ENCODE measurements at regions of chr7 and their contacts with region 1.

Region 1: DNA sequence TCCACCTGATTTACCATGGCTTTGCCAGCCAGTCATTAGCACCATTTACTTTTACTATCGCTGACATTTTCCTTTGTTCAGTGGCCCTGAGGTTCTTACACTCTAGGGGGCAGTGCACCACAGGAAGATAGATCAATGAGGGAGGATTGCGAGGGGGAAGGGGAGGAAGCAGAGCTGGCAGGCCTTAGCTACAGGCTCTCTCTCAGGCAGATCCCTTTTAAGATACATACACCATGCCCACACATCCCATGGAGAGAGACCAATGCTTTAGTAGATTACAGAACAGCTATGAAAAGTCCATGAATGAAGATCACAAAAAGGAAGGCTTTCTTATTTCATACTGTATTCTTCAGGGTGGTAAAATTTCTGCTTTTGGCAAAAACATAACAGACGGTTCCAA is 47.4 kb downstream of the DENND11 start:
- DNase-seq: peak; percentile 87
- H3K4me3 ChIP-seq: no peak overlapping the region; a peak in 1 of 4 replicates
- H3K27ac ChIP-seq: peak overlapping the region; percentile 12 to 64; a peak in 3 of 4 replicates
- H3K4me1 ChIP-seq: peaks cover 0 to 11% of the 10 kb centered on the region in 2 experiments; a peak in 2 of 4 replicates
- H3K27me3 ChIP-seq: no peaks in the 10 kb centered on the region
- CTCF ChIP-seq: peak; percentile 94
- EP300 ChIP-seq: peak in 1 of 2 experiments; percentile 13; a peak in 1 of 4 replicates
- RAD21 ChIP-seq: peak; percentile 91

Region 2: GRCh38 chr7:140810830-140811556 is 843.6 kb before region 1 on chr7:
- CTCF ChIA-PET with region 1: interaction called, 13 read pairs
- POLR2A ChIA-PET with region 1: no interaction called
- DNase-seq: peak; percentile 67
- H3K4me3 ChIP-seq: no peak overlapping the region; a peak in 1 of 4 replicates
- H3K27ac ChIP-seq: no peak overlapping the region
- H3K4me1 ChIP-seq: peaks cover 0 to 7% of the 10 kb centered on the region in 2 experiments; a peak in 2 of 4 replicates
- H3K27me3 ChIP-seq: no peaks in the 10 kb centered on the region
- CTCF ChIP-seq: peak; percentile 95
- EP300 ChIP-seq: 0 out of 4 replicates have a peak, but pooled peaks of 1 of the 2 experiments have one; percentile 11
- RAD21 ChIP-seq: peak; percentile 89

Region 3: GRCh38 chr7:141220263-141220880 is 434.2 kb before region 1 on chr7:
- CTCF ChIA-PET with region 1: interaction called, 12 read pairs
- POLR2A ChIA-PET with region 1: no interaction called
- DNase-seq: peak; percentile 86
- H3K4me3 ChIP-seq: peak overlapping the region in 1 of 2 experiments; percentile 47; a peak in 1 of 4 replicates
- H3K27ac ChIP-seq: no peak overlapping the region
- H3K4me1 ChIP-seq: peaks cover 0 to 22% of the 10 kb centered on the region in 2 experiments; a peak in 1 of 4 replicates
- H3K27me3 ChIP-seq: no peaks in the 10 kb centered on the region
- CTCF ChIP-seq: no peak
- EP300 ChIP-seq: no peak
- RAD21 ChIP-seq: peak; percentile 90

Region 4: GRCh38 chr7:141551094-141551781 is 103.3 kb before region 1 on chr7 and contains the start of gene AGK:
- CTCF ChIA-PET with region 1: interaction called, 18 read pairs
- POLR2A ChIA-PET with region 1: interaction called, 5 read pairs
- DNase-seq: peak; percentile 98
- H3K4me3 ChIP-seq: peak within 1 kb of the TSS; percentile 76 to 84
- H3K27ac ChIP-seq: peak within 1 kb of the TSS; percentile 25 to 84; a peak in 3 of 4 replicates
- H3K4me1 ChIP-seq: peaks cover 0 to 16% of the 10 kb centered on the region in 2 experiments; a peak in 3 of 4 replicates
- H3K27me3 ChIP-seq: no peaks in the 10 kb centered on the region
- CTCF ChIP-seq: no peak
- EP300 ChIP-seq: peak in 1 of 2 experiments; percentile 42; a peak in 1 of 4 replicates
- RAD21 ChIP-seq: no peak
- polyA plus RNA-seq, gene AGK: 45.7 and 67.0 TPM in 2 replicates

Region 5: DNA sequence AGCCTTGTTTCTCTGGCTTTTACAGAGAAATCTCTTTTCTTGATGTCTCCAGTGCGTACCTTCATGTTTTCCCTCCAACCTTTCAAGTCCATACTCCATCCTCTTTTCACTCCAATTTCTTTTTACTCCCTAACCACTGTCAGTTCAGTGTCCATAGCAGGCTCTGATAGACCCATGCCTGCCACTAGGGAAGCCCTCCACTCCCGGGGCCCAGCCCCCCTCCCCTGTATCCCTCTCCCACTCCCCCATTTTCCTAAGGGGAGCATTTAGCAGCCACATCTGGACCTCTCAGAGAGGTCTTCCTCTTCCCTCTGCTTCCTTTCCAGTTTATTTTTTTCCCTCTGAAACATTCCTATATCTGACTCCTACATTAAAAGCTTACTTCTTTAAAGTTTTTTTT is 14.3 kb after region 1 on chr7:
- CTCF ChIA-PET with region 1: interaction called, 39 read pairs
- POLR2A ChIA-PET with region 1: no interaction called
- DNase-seq: no peak
- H3K4me3 ChIP-seq: no peak overlapping the region
- H3K27ac ChIP-seq: no peak overlapping the region
- H3K4me1 ChIP-seq: no peaks in the 10 kb centered on the region
- H3K27me3 ChIP-seq: no peaks in the 10 kb centered on the region
- CTCF ChIP-seq: no peak
- EP300 ChIP-seq: no peak
- RAD21 ChIP-seq: no peak

Region 6: GRCh38 chr7:141701489-141702046 is 47.0 kb after region 1 on chr7:
- CTCF ChIA-PET with region 1: interaction called, 25 read pairs
- POLR2A ChIA-PET with region 1: no interaction called
- DNase-seq: peak; percentile 89
- H3K4me3 ChIP-seq: peak overlapping the region; percentile 77 to 81
- H3K27ac ChIP-seq: peak overlapping the region; percentile 38 to 45; a peak in 2 of 4 replicates
- H3K4me1 ChIP-seq: peaks cover 14 to 17% of the 10 kb centered on the region in 2 experiments; a peak in 3 of 4 replicates
- H3K27me3 ChIP-seq: no peaks in the 10 kb centered on the region
- CTCF ChIP-seq: no peak
- EP300 ChIP-seq: no peak
- RAD21 ChIP-seq: no peak

Region 7: DNA sequence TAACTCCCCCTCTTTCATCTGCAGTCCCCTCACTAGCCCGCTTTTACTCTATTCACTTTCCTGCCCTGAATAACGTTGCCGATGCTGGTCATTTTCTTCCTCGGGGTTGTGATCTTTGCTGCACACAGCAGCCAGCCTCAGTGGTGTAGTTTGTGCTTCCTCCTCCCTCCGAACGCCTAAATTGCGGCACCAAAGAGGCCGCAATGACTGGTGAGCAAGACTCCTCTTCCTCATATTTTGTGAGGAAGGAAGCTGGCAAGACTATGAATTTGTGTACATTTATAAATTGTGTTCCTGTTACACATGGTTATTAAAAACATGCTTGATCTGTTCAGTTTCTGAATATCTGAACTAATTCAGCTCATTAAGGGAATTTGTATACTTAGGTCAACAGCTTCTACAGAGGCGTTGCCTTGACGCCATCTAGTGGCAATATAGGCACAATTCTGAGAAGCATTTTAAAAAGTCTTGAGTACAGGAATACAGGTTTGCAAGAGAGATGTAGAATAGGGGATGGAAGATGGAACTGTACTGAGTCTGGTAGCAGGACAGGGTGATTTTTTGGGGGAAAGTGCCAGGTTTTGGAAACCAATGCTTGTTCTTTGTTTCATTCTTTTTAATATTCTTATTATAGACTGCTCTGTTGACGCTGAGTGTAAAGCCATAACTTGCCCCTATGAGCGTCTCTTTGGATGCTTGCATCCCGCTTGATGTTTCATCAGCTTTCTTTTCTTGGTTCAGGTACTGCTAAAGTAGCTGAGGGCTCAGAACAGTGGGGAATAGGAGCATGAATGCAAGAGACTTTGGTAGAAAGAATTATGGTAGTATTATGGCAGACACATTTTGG is 131.4 kb after region 1 on chr7:
- CTCF ChIA-PET with region 1: interaction called, 61 read pairs
- POLR2A ChIA-PET with region 1: interaction called, 4 read pairs
- DNase-seq: peak; percentile 63
- H3K4me3 ChIP-seq: no peak overlapping the region; a peak in 1 of 4 replicates
- H3K27ac ChIP-seq: no peak overlapping the region
- H3K4me1 ChIP-seq: no peaks in the 10 kb centered on the region
- H3K27me3 ChIP-seq: no peaks in the 10 kb centered on the region
- CTCF ChIP-seq: peak; percentile 98
- EP300 ChIP-seq: no peak
- RAD21 ChIP-seq: peak; percentile 80